Posterior cingulate gyrus (tissue), 11 donors: ENCODE measurements at regions of chr13 and their contacts with region 1.

Region 1: GRCh38 chr13:106520205-106521054 is 15.0 kb downstream of the EFNB2 start:
- DNase-seq: no peak

Region 2: DNA sequence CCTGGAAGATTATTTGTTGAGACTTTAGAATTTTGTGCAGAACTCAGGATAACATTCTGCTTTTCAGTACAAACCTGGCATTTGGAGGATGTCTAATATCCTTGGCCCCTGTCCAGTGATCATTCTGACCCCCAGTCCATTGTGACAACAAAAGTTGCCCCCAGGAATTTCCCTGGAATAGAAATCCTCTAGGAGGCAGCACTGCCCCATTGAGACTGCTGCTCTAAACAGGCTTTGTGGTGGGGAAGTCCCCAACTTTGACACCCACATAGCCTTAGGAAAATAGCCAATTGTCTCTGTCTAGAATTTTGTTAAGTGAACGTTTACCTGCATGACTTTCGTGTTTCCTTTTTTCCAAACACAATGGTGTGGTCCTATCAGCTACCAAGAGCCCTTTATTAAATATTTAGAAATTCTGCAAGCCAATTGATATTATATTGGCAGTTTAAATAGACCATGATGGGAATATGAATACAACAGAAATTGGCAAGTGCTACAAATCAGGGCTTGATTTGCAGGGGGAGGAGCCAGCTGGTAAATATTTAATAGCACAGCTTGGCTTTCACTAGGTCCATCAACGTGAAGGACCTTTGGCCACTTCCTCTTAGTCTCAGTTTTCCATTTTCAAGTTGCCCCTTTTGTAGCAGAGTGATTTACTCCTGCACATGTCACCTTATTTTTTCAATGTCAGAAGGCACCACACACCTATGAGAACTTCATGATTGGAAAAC is 436.6 kb before region 1 on chr13:
- intact Hi-C with region 1: loop called (anchors 5 kb)
- DNase-seq: peak in 4 of 10 donors; percentile 20 to 49 (median 42)

Region 3: DNA sequence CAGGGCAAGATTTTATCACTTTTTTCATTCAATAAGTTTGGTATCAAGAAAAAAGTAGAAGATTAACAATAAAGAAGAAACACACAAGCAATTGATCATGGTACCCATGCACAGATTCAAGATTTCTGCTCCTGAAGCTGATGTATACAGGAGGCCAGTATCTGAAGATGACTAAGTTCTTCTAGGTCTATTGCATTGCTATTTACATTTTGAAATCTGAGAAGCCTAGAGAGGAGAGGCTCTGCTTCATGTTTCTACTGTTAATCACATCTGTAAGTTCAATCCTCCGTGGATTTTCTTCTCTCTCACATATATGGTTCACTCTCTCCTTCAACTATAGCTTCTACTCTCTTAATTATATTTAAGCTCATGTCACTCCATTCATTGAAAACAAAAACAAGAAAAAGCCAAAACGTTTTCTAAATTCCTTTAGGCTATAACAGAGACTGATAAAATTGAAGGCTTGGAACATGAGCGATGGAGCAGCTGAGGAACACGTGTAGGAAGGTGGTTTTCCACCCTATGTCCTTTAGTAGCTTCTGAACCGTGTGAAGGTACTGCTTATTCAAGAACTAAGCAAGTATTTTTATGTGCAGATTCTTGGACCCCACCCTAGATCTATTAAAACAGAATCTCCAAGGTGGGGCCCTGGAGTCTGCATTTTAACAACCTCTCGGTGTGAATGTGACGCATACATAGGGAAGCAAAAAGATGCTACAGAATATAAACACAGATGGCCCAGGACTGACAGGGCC is 183.2 kb before region 1 on chr13:
- intact Hi-C with region 1: no loop called
- DNase-seq: no peak